Activated CD4-positive, alpha-beta T cell treated with anti-CD3 and anti-CD28 coated beads for 36 hours (primary cell): ENCODE measurements at regions of chr1 and their contacts with region 1.

Region 1: DNA sequence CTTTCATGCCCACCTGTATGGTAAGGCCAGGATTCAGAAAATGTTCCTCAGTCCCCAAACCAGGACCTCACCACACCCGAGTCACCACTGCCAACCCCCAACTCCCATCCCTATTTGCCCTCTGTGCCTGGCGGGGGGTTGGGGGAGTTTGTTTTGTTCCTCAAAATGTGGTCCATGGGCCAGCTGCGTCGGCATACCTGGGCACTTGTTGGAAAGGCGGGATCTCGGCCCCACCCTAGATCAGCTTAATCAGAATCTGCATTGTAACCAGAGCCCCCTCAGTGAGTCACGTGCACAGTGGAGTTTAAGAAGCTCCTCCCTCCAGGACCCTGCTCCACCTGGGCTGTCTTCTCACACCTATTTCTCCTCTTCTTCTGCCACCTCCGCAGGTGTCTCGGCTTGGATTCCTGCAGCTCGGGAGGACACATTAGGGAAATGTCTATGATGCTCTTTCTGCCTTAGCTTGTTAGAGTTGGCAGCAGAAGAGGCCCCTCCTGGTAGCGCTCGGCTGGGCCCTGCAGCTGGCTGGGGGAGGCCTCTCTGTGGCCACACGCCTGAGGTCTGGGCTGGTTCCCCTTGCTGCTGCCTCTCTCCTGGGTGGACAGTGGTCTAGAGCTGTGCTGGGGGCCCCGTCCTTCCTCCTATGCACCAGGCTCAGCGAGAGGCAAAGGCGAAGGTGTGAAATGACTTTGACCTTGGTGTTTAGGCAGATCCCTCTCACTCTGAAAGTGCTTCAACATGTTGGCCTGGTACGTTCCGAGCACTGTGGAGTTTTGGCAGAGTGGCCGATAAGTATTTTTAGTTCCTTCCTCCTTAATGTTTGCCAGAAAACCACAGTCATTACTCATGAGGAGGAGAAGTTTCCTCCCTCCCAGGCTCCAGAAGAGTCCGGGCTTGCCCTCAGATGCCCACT is 41.8 kb upstream of the CAMTA1 start:
- DNase-seq: peak; percentile 50
- ATAC-seq: peak; percentile 42
- H3K4me3 Mint-ChIP-seq: no peak overlapping the region
- H3K27ac Mint-ChIP-seq: no peak overlapping the region
- H3K4me1 Mint-ChIP-seq: peaks cover 16% of the 10 kb centered on the region
- H3K27me3 Mint-ChIP-seq: peaks cover 18% of the 10 kb centered on the region

Region 2: GRCh38 chr1:6727535-6727934 is 15.9 kb before region 1 on chr1:
- CTCF ChIA-PET with region 1: no interaction called
- POLR2A ChIA-PET with region 1: no interaction called
- intact Hi-C with region 1: no loop called
- DNase-seq: peak; percentile 81
- ATAC-seq: peak; percentile 75
- H3K4me3 Mint-ChIP-seq: no peak overlapping the region
- H3K27ac Mint-ChIP-seq: no peak overlapping the region
- H3K4me1 Mint-ChIP-seq: no peaks in the 10 kb centered on the region
- H3K27me3 Mint-ChIP-seq: peaks cover 7% of the 10 kb centered on the region

Region 3: GRCh38 chr1:6770751-6771440 is 27.5 kb after region 1 on chr1:
- CTCF ChIA-PET with region 1: no interaction called
- POLR2A ChIA-PET with region 1: no interaction called
- intact Hi-C with region 1: no loop called
- DNase-seq: no peak
- ATAC-seq: no peak
- H3K4me3 Mint-ChIP-seq: no peak overlapping the region
- H3K27ac Mint-ChIP-seq: no peak overlapping the region
- H3K4me1 Mint-ChIP-seq: no peaks in the 10 kb centered on the region
- H3K27me3 Mint-ChIP-seq: peaks cover 12% of the 10 kb centered on the region

Region 4: GRCh38 chr1:6859415-6860343 is 116.2 kb after region 1 on chr1:
- CTCF ChIA-PET with region 1: no interaction called
- POLR2A ChIA-PET with region 1: no interaction called
- intact Hi-C with region 1: loop called in 1 of 2 experiments (anchors 1 kb)
- DNase-seq: no peak
- ATAC-seq: peak; percentile 57
- H3K4me3 Mint-ChIP-seq: no peak overlapping the region
- H3K27ac Mint-ChIP-seq: peak overlapping the region; percentile 21
- H3K4me1 Mint-ChIP-seq: peaks cover 21% of the 10 kb centered on the region
- H3K27me3 Mint-ChIP-seq: no peaks in the 10 kb centered on the region

Region 5: GRCh38 chr1:7549277-7550161 is 806.1 kb after region 1 on chr1:
- CTCF ChIA-PET with region 1: no interaction called
- POLR2A ChIA-PET with region 1: no interaction called
- intact Hi-C with region 1: loop called in 1 of 2 experiments (anchors 2 kb)
- DNase-seq: peak; percentile 74
- ATAC-seq: peak; percentile 88
- H3K4me3 Mint-ChIP-seq: peak overlapping the region; percentile 53
- H3K27ac Mint-ChIP-seq: peak overlapping the region; percentile 98
- H3K4me1 Mint-ChIP-seq: peaks cover 20% of the 10 kb centered on the region
- H3K27me3 Mint-ChIP-seq: peaks cover 10% of the 10 kb centered on the region